PC-9 (cell line): ENCODE measurements at regions of chr17 and their contacts with region 1.

Region 1: GRCh38 chr17:82716203-82717010 is at the start of gene FN3KRP:
- DNase-seq: peak; percentile 72 to 84
- H3K4me3 ChIP-seq: peak within 1 kb of the TSS; percentile 68
- H3K27ac ChIP-seq: no peak within 1 kb of the TSS
- H3K4me1 ChIP-seq: no peaks in the 10 kb centered on the region; the same call in 1 of the 2 replicates
- H3K27me3 ChIP-seq: no peaks in the 10 kb centered on the region
- CTCF ChIP-seq: no peak
- total RNA-seq, gene FN3KRP: 28.8 and 34.1 TPM in 2 replicates

Region 2: DNA sequence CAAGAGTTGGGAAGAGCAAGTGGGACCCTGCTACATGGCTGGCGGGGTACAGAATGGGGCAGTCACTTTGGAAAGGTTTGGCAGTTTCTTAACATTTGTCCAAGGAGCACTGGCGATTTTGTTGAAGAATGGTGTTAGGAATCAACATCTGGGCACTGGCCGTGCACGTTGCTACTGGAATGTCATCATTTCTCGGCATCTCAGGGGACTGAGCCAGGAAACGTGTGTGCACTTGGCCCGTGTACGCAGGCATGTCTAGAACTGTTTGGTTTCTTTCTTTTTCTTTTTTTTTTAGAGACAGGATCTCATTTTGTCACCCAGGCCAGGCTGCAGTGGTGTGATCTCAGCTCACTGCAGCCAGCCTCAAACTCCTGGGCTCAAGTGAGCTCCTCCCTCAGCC is 214.2 kb before region 1 on chr17:
- CTCF ChIA-PET with region 1: no interaction called
- POLR2A ChIA-PET with region 1: no interaction called
- intact Hi-C with region 1: no loop called
- DNase-seq: no peak
- H3K4me3 ChIP-seq: no peak overlapping the region
- H3K27ac ChIP-seq: no peak overlapping the region
- H3K4me1 ChIP-seq: no peaks in the 10 kb centered on the region
- H3K27me3 ChIP-seq: no peaks in the 10 kb centered on the region
- CTCF ChIP-seq: no peak

Region 3: DNA sequence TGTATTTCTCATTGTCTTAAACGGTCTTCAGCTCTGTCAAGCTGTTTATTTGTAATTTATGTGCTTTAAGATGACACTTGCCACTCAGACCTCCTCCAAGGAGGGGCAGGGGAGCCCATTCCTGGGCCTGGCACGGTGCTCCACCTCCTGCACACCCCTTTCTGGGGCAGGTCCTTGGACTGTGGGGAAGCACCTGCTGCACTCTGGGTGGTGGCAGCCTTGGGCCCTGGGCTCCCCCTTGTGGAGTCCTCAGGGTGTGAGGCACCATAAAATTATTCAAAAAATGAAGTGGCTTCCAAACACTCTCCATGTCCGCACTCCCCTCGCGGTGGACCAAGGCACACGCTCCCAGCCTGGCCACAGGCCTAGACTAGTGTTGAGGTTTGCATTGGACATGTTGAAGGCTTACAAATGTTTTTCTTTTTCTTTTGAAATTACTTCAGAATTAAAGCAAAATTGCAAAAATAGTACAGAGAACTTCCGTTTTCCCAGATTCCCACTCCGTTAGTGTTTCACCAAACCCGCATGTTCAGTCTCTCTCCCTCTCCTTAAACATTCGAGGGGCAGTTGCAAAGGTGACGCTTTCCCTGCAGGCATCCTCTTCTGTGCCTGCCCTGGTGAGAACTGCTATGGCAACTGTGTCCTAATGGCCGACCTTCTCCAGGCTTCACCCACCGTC is 164.5 kb before region 1 on chr17:
- CTCF ChIA-PET with region 1: no interaction called
- POLR2A ChIA-PET with region 1: no interaction called
- intact Hi-C with region 1: no loop called
- DNase-seq: peak; percentile 46 to 76
- H3K4me3 ChIP-seq: no peak overlapping the region
- H3K27ac ChIP-seq: no peak overlapping the region
- H3K4me1 ChIP-seq: no peaks in the 10 kb centered on the region
- H3K27me3 ChIP-seq: no peaks in the 10 kb centered on the region
- CTCF ChIP-seq: peak; percentile 71

Region 4: DNA sequence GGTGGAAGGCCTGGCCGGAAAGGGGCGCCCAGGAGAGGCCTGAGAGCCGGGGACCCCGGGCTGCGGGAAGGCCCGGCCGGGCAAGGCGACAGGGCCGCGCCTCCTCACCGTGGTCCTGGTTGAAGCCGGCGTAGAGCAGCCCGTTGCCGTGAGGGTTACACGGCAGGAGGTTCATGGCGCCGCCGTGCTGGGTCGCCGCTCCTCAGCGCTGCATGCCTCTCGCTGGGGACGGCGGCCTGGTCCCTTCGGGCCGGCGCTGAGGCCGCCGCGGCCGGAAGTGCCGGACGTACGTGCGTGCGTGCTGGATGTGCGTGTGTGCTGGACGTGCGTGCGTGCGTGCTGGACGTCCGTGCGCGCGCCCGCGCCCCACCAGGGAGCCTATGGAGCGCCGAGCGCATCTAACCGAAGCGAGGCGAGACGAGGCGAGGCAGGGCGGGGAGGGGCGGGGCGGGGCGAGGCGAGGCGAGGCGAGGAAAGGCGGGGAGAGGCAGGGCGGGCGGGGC is 68.2 kb before region 1 on chr17 and contains the start of gene WDR45B:
- CTCF ChIA-PET with region 1: no interaction called
- POLR2A ChIA-PET with region 1: no interaction called
- intact Hi-C with region 1: loop called (anchors 10 kb)
- DNase-seq: peak; percentile 82 to 95
- H3K4me3 ChIP-seq: peak within 1 kb of the TSS; percentile 79
- H3K27ac ChIP-seq: peak within 1 kb of the TSS; percentile 80
- H3K4me1 ChIP-seq: no peaks in the 10 kb centered on the region; the same call in 1 of the 2 replicates
- H3K27me3 ChIP-seq: no peaks in the 10 kb centered on the region
- CTCF ChIP-seq: no peak
- total RNA-seq, gene WDR45B: 65.1 and 84.9 TPM in 2 replicates

Region 5: GRCh38 chr17:82655038-82655479 is 61.3 kb before region 1 on chr17:
- CTCF ChIA-PET with region 1: no interaction called
- POLR2A ChIA-PET with region 1: interaction called, 31 read pairs
- intact Hi-C with region 1: no loop called
- DNase-seq: peak; percentile 52 to 70
- H3K4me3 ChIP-seq: no peak overlapping the region; the same call in 1 of the 2 replicates
- H3K27ac ChIP-seq: peak overlapping the region; percentile 52
- H3K4me1 ChIP-seq: peaks cover 14% of the 10 kb centered on the region
- H3K27me3 ChIP-seq: no peaks in the 10 kb centered on the region
- CTCF ChIP-seq: no peak

Region 6: GRCh38 chr17:82677353-82677925 is 39.0 kb before region 1 on chr17:
- CTCF ChIA-PET with region 1: interaction called, 12 read pairs
- POLR2A ChIA-PET with region 1: no interaction called
- intact Hi-C with region 1: no loop called
- DNase-seq: no peak
- H3K4me3 ChIP-seq: no peak overlapping the region
- H3K27ac ChIP-seq: no peak overlapping the region
- H3K4me1 ChIP-seq: no peaks in the 10 kb centered on the region
- H3K27me3 ChIP-seq: no peaks in the 10 kb centered on the region
- CTCF ChIP-seq: no peak

Region 7: DNA sequence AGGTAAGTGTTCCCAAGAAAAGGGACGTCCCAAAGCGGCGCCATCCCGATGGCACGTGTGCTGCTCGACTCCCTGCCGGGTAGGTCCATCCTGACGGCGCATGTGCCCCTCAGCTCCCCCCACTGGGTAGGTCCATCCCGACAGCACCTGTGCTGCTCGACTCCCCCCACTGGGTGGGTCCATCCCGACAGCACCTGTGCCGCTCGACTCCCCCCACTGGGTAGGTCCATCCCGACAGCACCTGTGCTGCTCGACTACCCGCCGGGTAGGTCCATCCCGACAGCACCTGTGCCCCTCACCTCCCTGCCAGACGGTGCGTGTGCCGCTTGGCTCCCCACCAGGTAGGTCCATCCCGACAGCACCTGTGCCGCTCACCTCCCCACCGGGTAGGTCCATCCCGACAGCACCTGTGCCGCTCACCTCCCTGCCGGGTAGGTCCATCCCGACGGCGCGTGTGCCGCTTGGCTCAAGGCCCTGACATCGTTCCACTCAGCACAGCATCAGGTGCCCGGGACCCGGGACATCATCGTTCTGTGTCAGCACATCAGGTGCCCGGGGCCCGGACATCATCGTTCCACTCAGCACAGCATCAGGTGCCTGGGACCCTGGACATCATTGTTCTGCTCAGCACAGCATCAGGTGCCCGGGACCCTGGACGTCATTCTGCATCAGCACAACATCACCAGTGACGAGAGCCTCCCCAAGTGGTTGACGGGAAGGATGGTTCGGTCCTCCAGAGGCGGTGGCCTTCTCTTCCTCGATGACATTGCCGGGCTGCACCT is 13.3 kb after region 1 on chr17:
- CTCF ChIA-PET with region 1: no interaction called
- POLR2A ChIA-PET with region 1: interaction called, 17 read pairs
- intact Hi-C with region 1: no loop called
- DNase-seq: no peak
- H3K4me3 ChIP-seq: no peak overlapping the region
- H3K27ac ChIP-seq: no peak overlapping the region
- H3K4me1 ChIP-seq: no peaks in the 10 kb centered on the region
- H3K27me3 ChIP-seq: no peaks in the 10 kb centered on the region
- CTCF ChIP-seq: no peak